PC-3 (cell line): ENCODE measurements at regions of chr18 and their contacts with region 1.

Region 1: DNA sequence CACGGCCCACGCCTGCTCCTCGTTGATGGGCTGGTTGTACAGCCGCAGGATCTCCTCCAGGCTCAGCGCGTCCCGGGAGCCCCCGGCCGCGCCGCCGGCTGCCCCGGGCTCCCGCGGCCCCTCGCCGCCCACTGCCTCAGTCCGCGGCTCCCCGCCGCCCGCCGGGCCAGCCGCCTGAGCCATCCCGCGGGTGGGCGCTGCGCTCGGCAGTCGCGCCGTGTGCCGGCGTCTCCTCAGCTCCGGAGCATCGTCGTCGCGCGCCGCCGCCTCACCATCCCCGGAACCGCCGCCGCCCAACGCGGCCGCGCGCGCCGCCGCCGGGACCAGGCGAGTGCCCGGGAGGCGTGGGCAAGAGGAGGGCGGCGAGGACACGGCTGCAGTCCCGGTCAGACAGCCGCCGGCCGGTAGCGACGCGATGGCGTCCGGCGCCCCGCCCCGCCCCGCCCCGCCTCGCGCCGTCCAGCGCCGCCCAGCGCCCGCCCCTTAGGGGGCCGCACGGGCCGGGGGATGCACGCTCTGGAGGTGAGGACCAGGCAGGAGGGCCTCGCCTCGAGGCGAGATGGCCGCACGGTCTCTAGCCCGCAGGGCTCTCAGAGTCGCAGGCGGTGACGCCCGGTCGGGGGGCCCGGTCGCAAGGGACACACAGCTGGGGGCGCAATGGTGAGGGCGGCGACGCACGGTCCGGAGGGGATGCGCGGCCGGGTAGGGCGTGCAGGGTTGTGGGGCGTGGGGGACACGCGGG is at the start of gene SPIRE1:
- DNase-seq: peak; percentile 74
- ATAC-seq: peak; percentile 77
- H3K4me3 ChIP-seq: peak within 1 kb of the TSS; percentile 78
- H3K27ac ChIP-seq: peak within 1 kb of the TSS; percentile 27
- H3K4me1 ChIP-seq: peaks cover 41% of the 10 kb centered on the region
- H3K27me3 ChIP-seq: no peaks in the 10 kb centered on the region
- CTCF ChIP-seq: no peak
- total RNA-seq, gene SPIRE1: 29.9 and 32.4 TPM in 2 replicates

Region 2: DNA sequence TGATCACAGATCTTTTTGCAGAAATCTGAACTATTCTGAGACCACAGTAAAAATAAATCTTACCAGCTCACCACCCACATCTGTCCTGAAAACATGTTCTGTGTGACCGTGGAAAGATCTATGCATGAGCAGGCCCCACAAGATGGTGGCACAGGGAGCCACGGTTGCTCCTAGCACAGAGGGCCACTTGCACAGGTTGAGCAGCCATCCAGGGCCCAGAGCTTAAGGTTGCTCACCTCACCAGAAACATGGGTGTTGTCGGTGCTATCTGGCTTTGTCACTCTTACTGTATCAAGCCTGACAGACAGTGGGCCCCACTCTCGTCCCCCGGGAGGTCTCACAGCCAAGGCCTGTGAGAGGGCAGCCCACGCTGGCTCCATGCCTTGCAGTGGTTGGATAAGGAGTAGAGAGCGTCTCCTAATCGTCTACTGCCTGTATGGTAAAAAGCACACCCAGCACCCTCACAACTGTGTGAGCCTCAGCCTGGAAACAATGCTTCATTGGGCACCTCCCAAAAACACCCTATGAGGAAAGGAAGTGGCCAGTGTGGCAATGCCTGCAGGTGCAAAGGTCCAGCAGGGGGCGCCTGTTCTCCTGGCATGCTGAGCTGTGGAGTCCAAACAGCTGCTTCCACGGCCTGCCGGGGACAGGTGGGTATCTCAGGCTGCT is 330.2 kb before region 1 on chr18:
- CTCF ChIA-PET with region 1: no interaction called
- POLR2A ChIA-PET with region 1: no interaction called
- intact Hi-C with region 1: loop called (anchors 2 kb)
- DNase-seq: peak; percentile 86
- ATAC-seq: peak; percentile 98
- H3K4me3 ChIP-seq: no peak overlapping the region
- H3K27ac ChIP-seq: no peak overlapping the region
- H3K4me1 ChIP-seq: no peaks in the 10 kb centered on the region
- H3K27me3 ChIP-seq: no peaks in the 10 kb centered on the region
- CTCF ChIP-seq: peak; percentile 98

Region 3: GRCh38 chr18:12478269-12479047 is 179.4 kb before region 1 on chr18:
- CTCF ChIA-PET with region 1: no interaction called
- POLR2A ChIA-PET with region 1: no interaction called
- intact Hi-C with region 1: loop called (anchors 5 kb)
- DNase-seq: no peak
- ATAC-seq: peak; percentile 37; the same call in 1 of the 2 replicates
- H3K4me3 ChIP-seq: no peak overlapping the region
- H3K27ac ChIP-seq: no peak overlapping the region
- H3K4me1 ChIP-seq: no peaks in the 10 kb centered on the region
- H3K27me3 ChIP-seq: no peaks in the 10 kb centered on the region
- CTCF ChIP-seq: peak; percentile 37; the same call in 1 of the 2 replicates

Region 4: DNA sequence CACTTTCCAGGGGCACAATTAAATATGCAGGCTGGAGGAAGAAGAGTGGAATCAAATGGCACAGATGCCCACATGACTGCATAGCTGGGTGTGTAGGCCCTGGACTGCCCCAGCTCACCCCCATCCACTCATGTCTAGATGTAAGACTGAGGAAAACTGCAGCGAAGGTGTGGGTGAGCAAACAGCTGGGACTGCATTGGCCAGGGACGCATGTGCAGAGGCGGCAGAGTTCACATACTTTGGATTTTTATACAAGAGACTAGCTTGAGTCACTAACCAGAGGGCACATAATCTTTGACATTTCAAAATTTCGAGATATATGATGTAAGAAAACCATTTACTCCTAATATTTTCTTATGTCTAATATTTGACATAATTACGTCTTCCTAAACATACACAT is 60.1 kb before region 1 on chr18:
- CTCF ChIA-PET with region 1: no interaction called
- POLR2A ChIA-PET with region 1: no interaction called
- intact Hi-C with region 1: loop called (anchors 2 kb)
- DNase-seq: peak; percentile 86
- ATAC-seq: peak; percentile 73
- H3K4me3 ChIP-seq: no peak overlapping the region
- H3K27ac ChIP-seq: peak overlapping the region; percentile 56
- H3K4me1 ChIP-seq: peaks cover 48% of the 10 kb centered on the region
- H3K27me3 ChIP-seq: no peaks in the 10 kb centered on the region
- CTCF ChIP-seq: no peak

Region 5: GRCh38 chr18:12645254-12646203 is 12.3 kb before region 1 on chr18:
- CTCF ChIA-PET with region 1: interaction called, 3 read pairs
- POLR2A ChIA-PET with region 1: interaction called, 3 read pairs
- intact Hi-C with region 1: loop called (anchors 2 kb)
- DNase-seq: peak; percentile 49
- ATAC-seq: no peak
- H3K4me3 ChIP-seq: no peak overlapping the region
- H3K27ac ChIP-seq: peak overlapping the region; percentile 38
- H3K4me1 ChIP-seq: peaks cover 52% of the 10 kb centered on the region
- H3K27me3 ChIP-seq: no peaks in the 10 kb centered on the region
- CTCF ChIP-seq: no peak

Region 6: GRCh38 chr18:12679183-12679786 is 21.4 kb after region 1 on chr18:
- CTCF ChIA-PET with region 1: no interaction called
- POLR2A ChIA-PET with region 1: no interaction called
- intact Hi-C with region 1: no loop called
- DNase-seq: peak; percentile 24
- ATAC-seq: peak; percentile 90; the same call in 1 of the 2 replicates
- H3K4me3 ChIP-seq: no peak overlapping the region
- H3K27ac ChIP-seq: no peak overlapping the region
- H3K4me1 ChIP-seq: peaks cover 3% of the 10 kb centered on the region; the same call in 1 of the 2 replicates
- H3K27me3 ChIP-seq: no peaks in the 10 kb centered on the region
- CTCF ChIP-seq: no peak

Region 7: GRCh38 chr18:12777500-12777944 is 119.7 kb after region 1 on chr18:
- CTCF ChIA-PET with region 1: no interaction called
- POLR2A ChIA-PET with region 1: no interaction called
- intact Hi-C with region 1: no loop called
- DNase-seq: peak; percentile 33
- ATAC-seq: peak; percentile 77
- H3K4me3 ChIP-seq: peak overlapping the region; percentile 65
- H3K27ac ChIP-seq: peak overlapping the region; percentile 14
- H3K4me1 ChIP-seq: no peaks in the 10 kb centered on the region; the same call in 1 of the 2 replicates
- H3K27me3 ChIP-seq: no peaks in the 10 kb centered on the region
- CTCF ChIP-seq: no peak

Region 8: DNA sequence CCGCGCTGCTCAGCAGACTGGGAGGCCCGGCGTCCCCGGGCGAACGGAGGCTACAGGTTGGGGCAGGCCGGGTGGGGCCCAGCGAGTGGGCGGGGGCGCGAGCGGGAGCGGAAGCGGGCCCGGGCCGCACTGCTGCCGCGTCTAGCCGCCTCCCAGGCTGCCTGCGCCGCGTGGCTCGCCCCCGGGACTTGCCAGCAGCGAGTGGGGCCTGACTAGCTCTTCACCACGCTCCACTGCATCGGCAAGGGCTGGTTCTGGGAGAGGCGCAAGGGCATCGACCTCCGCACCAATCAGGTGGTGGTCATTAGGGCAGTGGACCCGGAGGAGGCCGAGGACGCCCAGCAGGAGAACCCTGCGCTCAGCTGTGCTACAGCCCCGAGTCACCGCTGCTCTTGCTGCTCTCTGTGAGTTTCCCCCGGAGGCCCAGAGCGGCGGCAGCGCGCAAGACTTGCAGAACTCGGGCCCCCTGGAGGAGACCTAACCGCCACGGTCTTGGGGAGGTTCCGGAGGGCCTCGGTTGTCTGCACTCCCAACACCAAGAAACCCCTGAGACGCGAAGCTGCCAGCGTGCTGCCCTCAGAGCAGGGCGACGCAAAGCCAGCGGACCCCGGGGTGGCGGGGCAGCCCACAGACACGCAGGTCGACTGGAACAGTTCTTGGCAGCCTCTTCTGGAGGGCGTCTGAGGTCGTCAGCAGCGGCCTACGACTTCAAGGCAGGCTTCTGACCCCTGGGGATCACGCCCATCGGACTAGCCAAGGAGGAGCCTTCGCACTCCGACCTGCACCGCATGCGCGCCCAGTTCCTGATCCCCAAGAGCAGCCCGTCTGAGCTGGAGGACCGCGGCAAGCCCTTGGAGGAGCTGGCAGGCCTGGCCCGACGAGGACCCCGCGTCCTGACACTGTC is 253.4 kb after region 1 on chr18:
- CTCF ChIA-PET with region 1: no interaction called
- POLR2A ChIA-PET with region 1: no interaction called
- intact Hi-C with region 1: no loop called
- DNase-seq: no peak
- ATAC-seq: no peak
- H3K4me3 ChIP-seq: no peak overlapping the region
- H3K27ac ChIP-seq: no peak overlapping the region
- H3K4me1 ChIP-seq: no peaks in the 10 kb centered on the region
- H3K27me3 ChIP-seq: peaks cover 20% of the 10 kb centered on the region
- CTCF ChIP-seq: no peak

Region 9: DNA sequence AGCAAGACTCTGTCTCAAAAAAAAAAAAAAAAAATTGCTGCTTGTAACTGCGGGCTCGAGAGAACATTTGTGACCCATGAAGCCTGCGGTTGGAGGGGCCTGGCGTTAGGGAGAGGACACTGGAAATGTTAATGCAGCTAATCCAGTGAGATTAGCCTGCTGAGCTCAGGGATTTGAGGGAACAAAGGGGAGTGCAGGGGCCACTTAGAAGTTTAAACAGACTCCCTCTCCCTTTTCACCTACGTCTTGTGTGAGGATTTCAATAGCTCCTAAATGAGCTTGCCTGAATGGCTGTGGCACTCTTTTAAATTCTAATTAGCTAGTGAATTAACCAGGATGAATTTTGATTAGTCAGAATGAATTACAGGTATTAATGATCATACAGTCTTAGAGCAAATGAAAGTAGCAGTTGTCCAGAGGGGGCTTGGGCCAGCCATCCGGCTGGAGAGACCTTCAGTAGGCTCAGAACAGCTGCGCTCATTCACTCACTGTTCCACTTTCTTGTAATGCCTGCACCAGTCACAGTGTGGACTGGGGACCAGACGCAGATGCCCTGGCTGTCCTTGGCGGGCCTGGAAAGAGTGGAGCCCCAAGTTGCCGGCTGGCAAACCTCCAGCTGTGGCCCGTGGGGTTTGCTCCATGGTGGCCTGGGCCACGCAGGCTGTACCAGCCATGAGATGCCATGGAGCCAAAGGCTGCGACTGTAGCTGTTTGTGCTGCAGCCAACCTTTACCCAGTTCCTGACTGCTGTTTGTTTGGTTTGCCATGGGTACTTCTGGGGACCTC is 581.5 kb after region 1 on chr18:
- CTCF ChIA-PET with region 1: no interaction called
- POLR2A ChIA-PET with region 1: no interaction called
- intact Hi-C with region 1: no loop called
- DNase-seq: no peak
- ATAC-seq: no peak
- H3K4me3 ChIP-seq: no peak overlapping the region
- H3K27ac ChIP-seq: no peak overlapping the region
- H3K4me1 ChIP-seq: no peaks in the 10 kb centered on the region
- H3K27me3 ChIP-seq: peaks cover 59% of the 10 kb centered on the region
- CTCF ChIP-seq: no peak